H1 (cell line): ENCODE measurements at regions of chr2 and their contacts with region 1.

Region 1: GRCh38 chr2:11829947-11830707 is 83.7 kb downstream of the LPIN1 start:
- DNase-seq: peak; percentile 73 to 78
- H3K4me3 ChIP-seq: peak overlapping the region in 1 of 4 experiments; percentile 33; a peak in 2 of 8 replicates
- H3K27ac ChIP-seq: peak overlapping the region; percentile 48; the same call in 1 of the 2 replicates
- H3K4me1 ChIP-seq: peaks cover 4 to 15% (median 8%) of the 10 kb centered on the region in 4 experiments; a peak in 6 of 7 replicates
- H3K27me3 ChIP-seq: no peaks in the 10 kb centered on the region
- CTCF ChIP-seq: peak; percentile 35 to 60 (median 56)
- EP300 ChIP-seq: no peak
- POLR2A ChIP-seq: 0 out of 3 replicates have a peak, but pooled peaks of 1 of the 2 experiments have one; percentile 19
- RAD21 ChIP-seq: peak; percentile 75 to 87

Region 2: GRCh38 chr2:11775384-11775783 is 54.7 kb before region 1 on chr2:
- CTCF ChIA-PET with region 1: no interaction called
- POLR2A ChIA-PET with region 1: no interaction called
- DNase-seq: no peak
- H3K4me3 ChIP-seq: no peak overlapping the region
- H3K27ac ChIP-seq: no peak overlapping the region
- H3K4me1 ChIP-seq: peaks cover 0 to 3% (median 1%) of the 10 kb centered on the region in 4 experiments; a peak in 3 of 7 replicates
- H3K27me3 ChIP-seq: no peaks in the 10 kb centered on the region
- CTCF ChIP-seq: no peak
- EP300 ChIP-seq: no peak
- POLR2A ChIP-seq: no peak
- RAD21 ChIP-seq: no peak

Region 3: GRCh38 chr2:11796190-11797171 is 33.6 kb before region 1 on chr2:
- CTCF ChIA-PET with region 1: no interaction called
- POLR2A ChIA-PET with region 1: no interaction called
- DNase-seq: no peak
- H3K4me3 ChIP-seq: no peak overlapping the region
- H3K27ac ChIP-seq: no peak overlapping the region
- H3K4me1 ChIP-seq: no peaks in the 10 kb centered on the region
- H3K27me3 ChIP-seq: no peaks in the 10 kb centered on the region
- CTCF ChIP-seq: no peak
- EP300 ChIP-seq: no peak
- POLR2A ChIP-seq: no peak
- RAD21 ChIP-seq: no peak

Region 4: GRCh38 chr2:11950894-11951293 is 120.8 kb after region 1 on chr2:
- CTCF ChIA-PET with region 1: interaction called, 10 read pairs
- POLR2A ChIA-PET with region 1: no interaction called
- DNase-seq: no peak
- H3K4me3 ChIP-seq: no peak overlapping the region
- H3K27ac ChIP-seq: no peak overlapping the region
- H3K4me1 ChIP-seq: no peaks in the 10 kb centered on the region
- H3K27me3 ChIP-seq: no peaks in the 10 kb centered on the region
- CTCF ChIP-seq: no peak
- EP300 ChIP-seq: no peak
- POLR2A ChIP-seq: no peak
- RAD21 ChIP-seq: no peak